ENCODE measurements at regions of chr2 and their contacts with region 1.

Region 1: GRCh38 chr2:99337113-99338028 is at the start of gene EIF5B:
- DNase-seq: peak; percentile 98
- ATAC-seq: peak; percentile 78
- H3K4me3 ChIP-seq: peak within 1 kb of the TSS; percentile 81
- H3K27ac ChIP-seq: peak within 1 kb of the TSS; percentile 73
- H3K4me1 ChIP-seq: peaks cover 34% of the 10 kb centered on the region
- H3K27me3 ChIP-seq: no peaks in the 10 kb centered on the region
- CTCF ChIP-seq: peak; percentile 83
- total RNA-seq, gene EIF5B: 35.7 and 35.9 TPM in 2 replicates

Region 2: GRCh38 chr2:99397251-99397920 is 60.0 kb after region 1 on chr2:
- CTCF ChIA-PET with region 1: no interaction called
- POLR2A ChIA-PET with region 1: no interaction called
- intact Hi-C with region 1: loop called (anchors 2 kb)
- DNase-seq: no peak
- ATAC-seq: no peak
- H3K4me3 ChIP-seq: no peak overlapping the region
- H3K27ac ChIP-seq: no peak overlapping the region
- H3K4me1 ChIP-seq: no peaks in the 10 kb centered on the region
- H3K27me3 ChIP-seq: no peaks in the 10 kb centered on the region
- CTCF ChIP-seq: no peak

Region 3: DNA sequence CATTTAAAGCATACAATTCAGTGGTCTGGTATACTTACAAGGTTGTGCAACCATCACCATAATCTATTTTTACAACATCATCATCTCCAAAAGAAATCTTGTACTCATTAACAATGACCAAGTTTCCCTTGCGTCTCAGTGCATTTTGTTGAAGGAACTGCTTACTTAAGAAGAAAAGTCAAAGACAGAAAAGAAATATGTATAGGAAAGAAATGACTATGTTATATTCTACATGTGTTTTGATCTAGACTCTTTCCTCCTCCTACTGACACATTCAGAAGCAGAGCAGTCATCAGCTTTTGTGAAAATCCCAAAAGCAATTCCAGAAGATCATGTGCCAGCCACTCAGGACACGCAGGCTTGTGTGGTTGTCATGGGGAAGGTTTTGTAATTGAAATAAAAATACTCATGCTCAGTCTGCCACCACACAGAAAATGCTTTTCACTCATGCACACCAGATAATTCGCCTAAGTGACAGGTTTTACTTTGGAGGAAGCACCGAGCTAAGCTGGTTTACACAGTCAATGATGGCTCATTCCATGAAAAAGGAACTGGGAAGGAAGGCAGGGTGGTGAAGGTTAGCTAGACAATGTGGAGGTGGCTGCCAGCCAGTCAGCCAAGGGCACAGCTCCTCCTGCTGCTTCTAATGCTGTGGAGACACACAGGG is 310.9 kb after region 1 on chr2:
- CTCF ChIA-PET with region 1: no interaction called
- POLR2A ChIA-PET with region 1: no interaction called
- intact Hi-C with region 1: no loop called
- DNase-seq: peak; percentile 13
- ATAC-seq: peak; percentile 38; the same call in 1 of the 2 replicates
- H3K4me3 ChIP-seq: no peak overlapping the region
- H3K27ac ChIP-seq: no peak overlapping the region
- H3K4me1 ChIP-seq: 0 out of 2 replicates have a peak, but pooled peaks cover 3% of the 10 kb centered on the region
- H3K27me3 ChIP-seq: no peaks in the 10 kb centered on the region
- CTCF ChIP-seq: no peak